ENCODE measurements at regions of chr6 and their contacts with region 1.

Region 1: DNA sequence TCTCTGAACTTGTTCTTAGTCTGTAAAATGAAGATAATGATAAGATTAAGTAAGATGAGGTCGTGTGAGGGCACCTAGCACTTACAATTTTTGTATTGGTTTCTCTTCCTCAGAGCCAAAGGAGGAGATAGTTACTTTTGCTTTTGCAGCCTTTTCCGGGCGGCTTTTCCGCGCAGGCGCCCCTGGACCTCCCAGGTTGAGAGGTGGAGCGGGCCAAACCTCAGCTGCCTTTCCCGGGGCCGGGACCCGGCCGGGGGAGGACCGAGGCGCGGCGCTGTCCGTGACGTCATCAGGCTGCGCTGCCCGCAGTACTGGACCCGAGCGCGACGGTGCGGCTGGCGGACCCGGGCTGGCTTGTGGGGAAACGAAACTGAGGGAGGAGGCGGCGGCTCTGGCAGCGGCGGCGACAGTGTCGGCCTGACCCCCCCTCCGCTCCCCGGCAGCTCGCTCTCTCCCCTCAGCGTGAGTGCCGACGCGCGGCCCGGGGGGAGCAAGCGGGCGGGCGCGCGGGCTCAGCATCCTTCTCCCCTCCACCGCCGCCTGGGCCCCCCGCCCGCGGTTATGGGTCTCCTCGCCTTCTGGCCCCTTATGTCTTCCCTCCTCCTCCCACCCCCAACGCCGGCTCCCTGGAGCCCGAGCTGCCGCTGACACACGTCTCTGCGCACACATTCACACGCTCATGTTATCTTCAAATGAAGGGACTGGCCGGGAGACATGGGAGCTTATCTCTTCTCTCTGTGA is at the start of gene CMTR1:
- DNase-seq: peak; percentile 97
- H3K4me3 Mint-ChIP-seq: peak within 1 kb of the TSS; percentile 97
- H3K27ac Mint-ChIP-seq: peak within 1 kb of the TSS; percentile 97
- H3K4me1 Mint-ChIP-seq: peaks cover 36% of the 10 kb centered on the region
- H3K27me3 Mint-ChIP-seq: no peaks in the 10 kb centered on the region
- total RNA-seq, gene CMTR1: 70.9 to 71.3 TPM

Region 2: GRCh38 chr6:36938536-36938935 is 494.6 kb before region 1 on chr6:
- CTCF ChIA-PET with region 1: no interaction called
- intact Hi-C with region 1: no loop called
- DNase-seq: no peak
- H3K4me3 Mint-ChIP-seq: no peak overlapping the region
- H3K27ac Mint-ChIP-seq: no peak overlapping the region
- H3K4me1 Mint-ChIP-seq: no peaks in the 10 kb centered on the region
- H3K27me3 Mint-ChIP-seq: no peaks in the 10 kb centered on the region

Region 3: GRCh38 chr6:37257634-37258404 is 175.3 kb before region 1 on chr6 and contains the starts of genes TBC1D22B and TMEM217:
- CTCF ChIA-PET with region 1: no interaction called
- intact Hi-C with region 1: loop called (anchors 5 kb)
- DNase-seq: peak; percentile 99
- H3K4me3 Mint-ChIP-seq: peak within 1 kb of the TSS; percentile 80
- H3K27ac Mint-ChIP-seq: peak within 1 kb of the TSS; percentile 87
- H3K4me1 Mint-ChIP-seq: peaks cover 46% of the 10 kb centered on the region
- H3K27me3 Mint-ChIP-seq: no peaks in the 10 kb centered on the region
- total RNA-seq, gene TBC1D22B: 13.4 to 15.1 TPM
- total RNA-seq, gene TMEM217: 0.81 to 0.95 TPM

Region 4: DNA sequence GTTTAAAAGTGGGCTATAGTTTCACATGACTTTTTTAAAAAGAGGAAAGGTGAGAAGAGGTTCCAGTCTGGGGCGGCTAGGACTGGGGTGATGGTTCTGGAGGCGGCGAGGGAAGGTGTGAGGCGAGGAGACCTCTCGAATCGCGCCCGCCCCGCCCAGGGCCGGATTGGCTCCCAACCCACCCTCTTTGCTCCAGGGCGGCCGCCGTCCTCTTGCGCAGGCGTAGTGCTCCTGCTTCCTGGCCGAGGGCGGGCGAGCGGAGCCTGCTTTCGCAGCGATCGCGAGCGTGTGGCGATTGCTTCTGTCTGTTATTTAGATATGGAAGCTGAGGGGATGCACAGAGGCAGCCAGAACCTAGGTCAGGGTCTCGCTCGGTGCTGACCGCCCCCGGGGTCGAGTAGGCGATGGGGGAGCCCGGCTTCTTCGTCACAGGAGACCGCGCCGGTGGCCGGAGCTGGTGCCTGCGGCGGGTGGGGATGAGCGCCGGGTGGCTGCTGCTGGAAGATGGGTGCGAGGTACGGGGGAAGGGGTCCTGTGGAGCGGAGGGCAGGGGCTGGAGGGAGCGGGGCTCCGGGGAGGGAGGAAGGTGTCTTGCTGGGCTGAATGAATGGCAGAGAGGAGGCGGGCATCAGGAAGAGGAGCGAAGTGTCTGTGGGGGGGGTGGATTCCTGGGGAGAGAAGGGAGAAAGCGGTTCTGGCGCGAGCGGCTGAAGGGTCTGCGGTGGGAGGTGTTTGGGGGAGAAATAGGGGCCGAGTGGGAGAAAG is 79.1 kb before region 1 on chr6 and contains the start of gene RNF8:
- CTCF ChIA-PET with region 1: interaction called, 3 read pairs
- intact Hi-C with region 1: loop called (anchors 1 kb)
- DNase-seq: peak; percentile 95
- H3K4me3 Mint-ChIP-seq: peak within 1 kb of the TSS; percentile 92
- H3K27ac Mint-ChIP-seq: peak within 1 kb of the TSS; percentile 70
- H3K4me1 Mint-ChIP-seq: peaks cover 24% of the 10 kb centered on the region
- H3K27me3 Mint-ChIP-seq: no peaks in the 10 kb centered on the region
- total RNA-seq, gene RNF8: 18.6 to 19.4 TPM

Region 5: DNA sequence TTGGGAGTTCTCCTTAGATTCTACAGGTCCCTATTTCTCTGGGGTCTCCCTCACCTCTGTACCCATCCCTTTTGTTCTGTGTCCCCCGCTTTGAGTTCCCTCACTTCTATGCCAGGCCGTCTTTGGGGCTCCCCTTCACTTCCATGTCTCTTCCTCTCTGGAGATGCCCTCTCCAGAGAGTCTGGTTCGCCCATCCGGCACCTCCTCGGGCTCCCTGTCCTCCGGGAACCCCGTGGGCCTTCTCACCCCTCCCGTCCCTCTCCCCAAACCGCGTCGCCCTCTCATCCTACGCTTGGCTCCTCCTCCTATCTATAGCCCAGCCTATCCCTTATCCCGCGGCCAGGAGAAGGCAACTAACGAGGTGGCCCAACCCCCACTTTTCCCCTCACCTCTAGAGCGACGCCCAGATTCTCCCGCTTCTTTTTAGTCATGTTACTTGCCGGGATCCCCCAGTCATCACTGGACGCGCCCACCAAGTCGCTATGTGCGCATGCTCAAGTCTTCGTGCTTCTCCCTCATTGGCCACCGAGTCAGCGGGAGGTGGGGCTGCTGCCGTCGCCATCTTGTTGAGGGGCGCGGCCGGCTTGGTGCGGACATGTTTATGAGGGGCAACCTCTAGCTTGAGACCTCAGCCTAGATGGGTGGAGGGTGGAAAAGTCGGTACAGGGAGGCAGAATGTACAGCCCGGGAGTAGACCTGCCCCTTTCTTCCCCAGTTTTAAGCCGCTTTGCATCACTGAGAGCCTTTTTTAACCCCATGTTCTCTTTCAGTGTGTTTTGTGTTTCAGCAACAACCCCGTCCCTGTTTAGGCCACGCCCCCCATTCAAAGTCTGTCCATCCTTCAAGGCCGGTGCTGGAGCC is 66.6 kb after region 1 on chr6 and contains the start of gene CCDC167:
- CTCF ChIA-PET with region 1: interaction called, 4 read pairs
- intact Hi-C with region 1: loop called (anchors 5 kb)
- DNase-seq: peak; percentile 99
- H3K4me3 Mint-ChIP-seq: peak within 1 kb of the TSS; percentile 98
- H3K27ac Mint-ChIP-seq: peak within 1 kb of the TSS; percentile 97
- H3K4me1 Mint-ChIP-seq: peaks cover 90% of the 10 kb centered on the region
- H3K27me3 Mint-ChIP-seq: no peaks in the 10 kb centered on the region
- total RNA-seq, gene CCDC167: 53.4 to 57.1 TPM

Region 6: DNA sequence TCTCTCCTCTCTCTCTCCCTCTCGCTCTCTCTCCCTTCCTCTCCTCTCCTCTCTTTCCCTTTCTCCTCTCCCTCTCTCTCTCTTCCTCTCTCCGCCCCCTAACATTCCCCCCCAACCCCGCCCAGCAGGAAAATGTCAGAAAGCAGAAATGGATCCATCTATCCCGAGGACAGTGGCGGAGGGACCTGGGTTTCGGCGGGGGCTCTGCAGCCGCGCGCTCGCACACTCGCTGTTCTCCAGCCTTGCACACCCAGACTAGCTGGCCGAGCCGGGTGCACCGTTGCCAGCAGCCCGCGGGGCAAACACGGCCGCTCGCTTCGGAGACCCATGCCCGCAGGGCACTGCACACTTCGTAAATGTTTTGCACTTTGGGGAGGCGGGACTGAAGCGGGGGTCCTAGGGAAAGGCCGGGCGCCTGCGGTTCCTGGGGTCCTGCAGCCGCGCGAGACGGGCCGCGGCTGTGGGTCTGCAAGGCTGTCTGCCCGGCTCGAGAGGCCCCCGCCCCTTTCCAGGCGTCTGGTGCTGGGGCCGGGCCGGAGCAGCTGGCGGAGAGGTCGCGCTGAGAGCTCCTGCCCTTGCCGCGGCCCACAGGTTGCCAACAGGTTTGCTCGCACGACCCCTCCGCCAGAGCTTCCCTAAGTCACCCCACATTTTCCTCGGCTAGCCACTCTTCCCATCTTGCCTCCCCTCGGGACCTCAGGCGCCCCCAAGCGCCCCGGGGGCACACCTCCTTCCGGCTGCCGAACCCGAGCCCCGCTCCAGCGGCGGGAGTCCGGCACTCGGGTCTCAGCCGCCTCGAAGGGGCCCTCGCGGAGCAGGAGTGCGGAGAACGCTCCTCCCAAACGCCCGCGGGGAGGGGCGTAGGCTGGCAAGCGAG is 265.4 kb after region 1 on chr6:
- CTCF ChIA-PET with region 1: no interaction called
- intact Hi-C with region 1: loop called (anchors 1 kb)
- DNase-seq: peak; percentile 48
- H3K4me3 Mint-ChIP-seq: peak overlapping the region; percentile 98
- H3K27ac Mint-ChIP-seq: peak overlapping the region; percentile 82
- H3K4me1 Mint-ChIP-seq: peaks cover 18% of the 10 kb centered on the region
- H3K27me3 Mint-ChIP-seq: peaks cover 19% of the 10 kb centered on the region

Region 7: GRCh38 chr6:38639498-38640215 is 1206.6 kb after region 1 on chr6 and contains the start of gene BTBD9:
- CTCF ChIA-PET with region 1: no interaction called
- intact Hi-C with region 1: loop called (anchors 5 kb)
- DNase-seq: peak; percentile 79
- H3K4me3 Mint-ChIP-seq: peak within 1 kb of the TSS; percentile 89
- H3K27ac Mint-ChIP-seq: peak within 1 kb of the TSS; percentile 86
- H3K4me1 Mint-ChIP-seq: peaks cover 47% of the 10 kb centered on the region
- H3K27me3 Mint-ChIP-seq: no peaks in the 10 kb centered on the region
- total RNA-seq, gene BTBD9: 9.5 to 11.1 TPM

Measured in activated naive CD4-positive, alpha-beta T cell treated with anti-CD3 and anti-CD28 coated beads for 36 hours (primary cell).